ENCODE measurements at regions of chr18 and their contacts with region 1.

Region 1: GRCh38 chr18:48345596-48345995 is 63.6 kb downstream of the ZBTB7C start:
- DNase-seq: no peak
- H3K4me3 ChIP-seq: no peak overlapping the region
- H3K27ac ChIP-seq: no peak overlapping the region
- H3K4me1 ChIP-seq: peaks cover 23% of the 10 kb centered on the region
- H3K27me3 ChIP-seq: no peaks in the 10 kb centered on the region
- CTCF ChIP-seq: peak; percentile 48

Region 2: GRCh38 chr18:48030616-48031480 is 314.7 kb before region 1 on chr18:
- intact Hi-C with region 1: loop called (anchors 10 kb)
- DNase-seq: no peak
- H3K4me3 ChIP-seq: no peak overlapping the region
- H3K27ac ChIP-seq: no peak overlapping the region
- H3K4me1 ChIP-seq: peaks cover 24% of the 10 kb centered on the region
- H3K27me3 ChIP-seq: no peaks in the 10 kb centered on the region
- CTCF ChIP-seq: peak; percentile 82

Region 3: DNA sequence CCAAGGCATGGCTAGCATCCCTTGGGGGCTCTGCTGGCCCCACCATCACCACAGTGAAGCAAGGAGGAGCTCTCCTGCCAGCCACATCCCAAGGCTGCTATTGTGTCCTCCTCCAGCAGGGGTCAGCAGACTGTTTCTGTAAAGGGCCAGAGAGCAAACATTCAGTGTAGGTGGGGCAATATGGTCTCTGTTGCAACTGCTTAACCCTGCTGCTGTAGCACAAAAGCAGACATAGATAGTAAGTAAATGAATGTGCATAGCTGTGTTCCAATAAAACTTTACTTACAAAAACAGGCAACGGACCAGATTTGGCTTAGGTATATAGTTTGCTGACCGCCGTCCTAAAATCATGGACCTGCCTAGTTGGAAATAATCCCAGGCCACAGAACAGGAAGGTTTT is 99.9 kb after region 1 on chr18:
- intact Hi-C with region 1: loop called (anchors 10 kb)
- DNase-seq: peak; percentile 64
- H3K4me3 ChIP-seq: no peak overlapping the region
- H3K27ac ChIP-seq: no peak overlapping the region
- H3K4me1 ChIP-seq: peaks cover 29% of the 10 kb centered on the region
- H3K27me3 ChIP-seq: no peaks in the 10 kb centered on the region
- CTCF ChIP-seq: peak; percentile 89

Measured in left ventricle myocardium inferior (tissue), 1 donor.